Activated CD8-positive, alpha-beta T cell treated with anti-CD3 and anti-CD28 coated beads for 36 hours (primary cell): ENCODE measurements at regions of chr18 and their contacts with region 1.

Region 1: GRCh38 chr18:59685501-59685900 is 11.7 kb downstream of the CCBE1 start:
- DNase-seq: no peak
- ATAC-seq: no peak
- H3K4me3 Mint-ChIP-seq: no peak overlapping the region
- H3K27ac Mint-ChIP-seq: no peak overlapping the region
- H3K4me1 Mint-ChIP-seq: no peaks in the 10 kb centered on the region
- H3K27me3 Mint-ChIP-seq: peaks cover 13% of the 10 kb centered on the region
- CTCF ChIP-seq: no peak

Region 2: DNA sequence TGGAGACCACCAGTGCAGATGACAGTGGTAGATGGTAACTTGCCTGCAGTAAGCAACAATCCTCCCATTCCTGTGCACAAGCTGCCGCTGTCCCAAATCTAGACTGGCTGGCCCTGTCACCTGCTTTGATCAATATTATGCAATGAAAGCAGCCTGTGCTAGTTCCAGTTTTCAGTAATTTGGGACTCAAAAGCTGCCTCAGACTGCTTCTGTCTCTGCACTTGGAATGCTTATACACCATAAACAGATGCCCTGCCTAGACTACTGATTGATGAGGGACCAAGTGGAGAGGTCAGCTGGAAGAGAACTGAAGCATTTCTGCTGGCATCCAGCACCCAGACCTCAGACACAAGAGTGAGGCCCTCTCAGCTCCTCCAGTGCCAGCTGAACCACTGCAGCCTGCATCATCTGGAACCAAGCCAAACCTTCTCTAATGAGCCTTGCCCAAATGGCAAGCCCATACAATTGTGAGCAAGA is 13.2 kb before region 1 on chr18:
- CTCF ChIA-PET with region 1: no interaction called
- POLR2A ChIA-PET with region 1: no interaction called
- intact Hi-C with region 1: no loop called
- DNase-seq: no peak
- ATAC-seq: no peak
- H3K4me3 Mint-ChIP-seq: no peak overlapping the region
- H3K27ac Mint-ChIP-seq: no peak overlapping the region
- H3K4me1 Mint-ChIP-seq: no peaks in the 10 kb centered on the region
- H3K27me3 Mint-ChIP-seq: peaks cover 4% of the 10 kb centered on the region
- CTCF ChIP-seq: no peak

Region 3: GRCh38 chr18:59697236-59697932 is 11.9 kb after region 1 on chr18 and contains the start of gene CCBE1:
- CTCF ChIA-PET with region 1: interaction called, 24 read pairs
- POLR2A ChIA-PET with region 1: no interaction called
- intact Hi-C with region 1: no loop called
- DNase-seq: peak; percentile 55
- ATAC-seq: peak; percentile 53
- H3K4me3 Mint-ChIP-seq: no peak within 1 kb of the TSS
- H3K27ac Mint-ChIP-seq: no peak within 1 kb of the TSS
- H3K4me1 Mint-ChIP-seq: peaks cover 8% of the 10 kb centered on the region
- H3K27me3 Mint-ChIP-seq: peaks cover 52% of the 10 kb centered on the region
- CTCF ChIP-seq: peak; percentile 86
- total RNA-seq, gene CCBE1: not detected